ENCODE measurements at regions of chr20 and their contacts with region 1.

Region 1: GRCh38 chr20:56574531-56575142 is 41.6 kb downstream of the FAM209B start:
- DNase-seq: no peak
- H3K4me3 ChIP-seq: no peak overlapping the region
- H3K4me3 Mint-ChIP-seq: no peak overlapping the region
- H3K27ac Mint-ChIP-seq: peak overlapping the region; percentile 4
- H3K4me1 ChIP-seq: peaks cover 12% of the 10 kb centered on the region
- H3K4me1 Mint-ChIP-seq: peaks cover 19% of the 10 kb centered on the region
- H3K27me3 ChIP-seq: no peaks in the 10 kb centered on the region
- H3K27me3 Mint-ChIP-seq: no peaks in the 10 kb centered on the region
- CTCF ChIP-seq: no peak

Region 2: GRCh38 chr20:56247948-56248782 is 326.5 kb before region 1 on chr20 and contains the start of gene MC3R:
- CTCF ChIA-PET with region 1: no interaction called
- POLR2A ChIA-PET with region 1: no interaction called
- intact Hi-C with region 1: loop called (anchors 1 kb)
- DNase-seq: peak; percentile 86
- H3K4me3 ChIP-seq: no peak within 1 kb of the TSS
- H3K4me3 Mint-ChIP-seq: no peak within 1 kb of the TSS
- H3K27ac Mint-ChIP-seq: no peak within 1 kb of the TSS
- H3K4me1 ChIP-seq: no peaks in the 10 kb centered on the region
- H3K4me1 Mint-ChIP-seq: no peaks in the 10 kb centered on the region
- H3K27me3 ChIP-seq: no peaks in the 10 kb centered on the region
- H3K27me3 Mint-ChIP-seq: peaks cover 33% of the 10 kb centered on the region
- CTCF ChIP-seq: peak; percentile 92 to 99
- total RNA-seq, gene MC3R: not detected in 2 replicates

Region 3: GRCh38 chr20:56400090-56400542 is 174.5 kb before region 1 on chr20:
- CTCF ChIA-PET with region 1: no interaction called
- POLR2A ChIA-PET with region 1: no interaction called
- intact Hi-C with region 1: loop called (anchors 1 kb)
- DNase-seq: peak; percentile 66 to 81
- H3K4me3 ChIP-seq: no peak overlapping the region
- H3K4me3 Mint-ChIP-seq: no peak overlapping the region
- H3K27ac Mint-ChIP-seq: no peak overlapping the region
- H3K4me1 ChIP-seq: peaks cover 6% of the 10 kb centered on the region
- H3K4me1 Mint-ChIP-seq: peaks cover 5% of the 10 kb centered on the region
- H3K27me3 ChIP-seq: no peaks in the 10 kb centered on the region
- H3K27me3 Mint-ChIP-seq: no peaks in the 10 kb centered on the region
- CTCF ChIP-seq: peak; percentile 96

Region 4: DNA sequence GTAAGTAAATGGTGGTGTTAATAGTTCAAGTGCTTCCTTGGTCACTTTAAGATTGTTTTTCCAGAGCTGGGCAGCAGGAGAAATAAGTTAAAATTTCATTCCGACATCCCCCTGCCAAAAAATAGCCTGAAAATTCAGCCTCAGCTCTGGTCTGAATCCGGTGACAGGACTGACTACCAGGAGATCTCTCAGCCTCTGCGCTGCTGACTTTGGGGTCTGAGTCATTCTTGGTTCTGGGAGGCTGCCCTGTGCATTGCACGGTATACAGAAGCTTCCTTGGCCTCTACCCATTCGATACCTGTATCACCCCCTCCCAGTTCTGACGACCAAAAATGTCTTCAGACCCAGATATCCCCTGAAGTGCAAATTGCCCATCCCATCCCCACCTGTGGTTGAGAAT is 18.2 kb after region 1 on chr20:
- CTCF ChIA-PET with region 1: interaction called, 6 read pairs
- POLR2A ChIA-PET with region 1: interaction called, 4 read pairs
- intact Hi-C with region 1: loop called (anchors 2 kb)
- DNase-seq: no peak
- H3K4me3 ChIP-seq: no peak overlapping the region
- H3K4me3 Mint-ChIP-seq: no peak overlapping the region
- H3K27ac Mint-ChIP-seq: peak overlapping the region; percentile 89
- H3K4me1 ChIP-seq: peaks cover 50% of the 10 kb centered on the region
- H3K4me1 Mint-ChIP-seq: peaks cover 51% of the 10 kb centered on the region
- H3K27me3 ChIP-seq: no peaks in the 10 kb centered on the region
- H3K27me3 Mint-ChIP-seq: no peaks in the 10 kb centered on the region
- CTCF ChIP-seq: no peak

Region 5: GRCh38 chr20:56606174-56606884 is 31.7 kb after region 1 on chr20:
- CTCF ChIA-PET with region 1: interaction called, 12 read pairs
- POLR2A ChIA-PET with region 1: interaction called, 5 read pairs
- intact Hi-C with region 1: loop called (anchors 1 kb)
- DNase-seq: peak; percentile 94 to 97
- H3K4me3 ChIP-seq: no peak overlapping the region
- H3K4me3 Mint-ChIP-seq: peak overlapping the region; percentile 45
- H3K27ac Mint-ChIP-seq: peak overlapping the region; percentile 94
- H3K4me1 ChIP-seq: peaks cover 63% of the 10 kb centered on the region
- H3K4me1 Mint-ChIP-seq: peaks cover 72% of the 10 kb centered on the region
- H3K27me3 ChIP-seq: no peaks in the 10 kb centered on the region
- H3K27me3 Mint-ChIP-seq: no peaks in the 10 kb centered on the region
- CTCF ChIP-seq: peak in 1 of 2 experiments; percentile 3

Region 6: DNA sequence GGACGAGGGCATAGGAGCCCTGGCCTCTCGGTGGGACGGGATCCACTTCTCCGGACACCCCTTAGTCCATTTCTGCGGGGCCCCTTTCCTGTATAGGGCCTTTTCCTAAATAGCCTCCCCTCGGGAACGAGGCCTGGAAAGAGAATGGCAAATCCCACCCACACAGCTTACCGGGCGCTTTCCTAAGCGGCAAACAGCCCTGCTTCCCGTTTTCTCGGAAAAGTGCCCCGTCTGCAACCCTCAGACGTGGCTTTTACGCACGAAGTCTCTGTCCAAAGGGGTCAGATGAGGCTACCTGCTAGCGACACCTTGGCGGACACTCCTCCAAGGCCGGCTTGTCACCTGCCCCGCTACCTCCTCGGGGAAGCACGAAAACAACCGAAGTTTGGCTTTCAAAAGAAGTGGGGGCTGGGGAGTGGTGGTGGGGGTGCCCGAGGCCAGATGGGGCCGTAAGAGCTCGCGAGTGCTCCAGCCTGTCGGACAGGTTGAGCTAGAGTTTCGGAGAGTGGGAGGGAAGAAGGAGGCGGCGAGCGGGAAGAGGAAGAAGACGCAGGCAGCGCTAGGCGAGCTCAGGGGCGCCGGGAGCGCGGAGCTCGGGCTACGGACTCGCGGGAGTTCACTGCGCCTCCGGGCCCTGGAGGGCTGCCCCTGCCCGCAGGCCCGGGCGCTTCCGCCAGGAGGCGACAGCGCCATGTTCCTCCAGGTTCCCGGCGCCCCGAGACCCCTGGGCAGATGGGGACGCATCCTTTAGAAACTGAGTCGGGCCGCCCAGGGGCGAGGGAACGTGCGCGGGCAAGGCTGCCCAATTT is 55.2 kb after region 1 on chr20:
- CTCF ChIA-PET with region 1: interaction called, 23 read pairs
- POLR2A ChIA-PET with region 1: interaction called, 26 read pairs
- intact Hi-C with region 1: loop called (anchors 1 kb)
- DNase-seq: peak; percentile 94 to 95
- H3K4me3 ChIP-seq: peak overlapping the region; percentile 75
- H3K4me3 Mint-ChIP-seq: peak overlapping the region; percentile 79
- H3K27ac Mint-ChIP-seq: peak overlapping the region; percentile 64
- H3K4me1 ChIP-seq: peaks cover 6% of the 10 kb centered on the region; the same call in 1 of the 2 replicates
- H3K4me1 Mint-ChIP-seq: peaks cover 6% of the 10 kb centered on the region
- H3K27me3 ChIP-seq: no peaks in the 10 kb centered on the region
- H3K27me3 Mint-ChIP-seq: no peaks in the 10 kb centered on the region
- CTCF ChIP-seq: peak; percentile 95 to 96

Region 7: DNA sequence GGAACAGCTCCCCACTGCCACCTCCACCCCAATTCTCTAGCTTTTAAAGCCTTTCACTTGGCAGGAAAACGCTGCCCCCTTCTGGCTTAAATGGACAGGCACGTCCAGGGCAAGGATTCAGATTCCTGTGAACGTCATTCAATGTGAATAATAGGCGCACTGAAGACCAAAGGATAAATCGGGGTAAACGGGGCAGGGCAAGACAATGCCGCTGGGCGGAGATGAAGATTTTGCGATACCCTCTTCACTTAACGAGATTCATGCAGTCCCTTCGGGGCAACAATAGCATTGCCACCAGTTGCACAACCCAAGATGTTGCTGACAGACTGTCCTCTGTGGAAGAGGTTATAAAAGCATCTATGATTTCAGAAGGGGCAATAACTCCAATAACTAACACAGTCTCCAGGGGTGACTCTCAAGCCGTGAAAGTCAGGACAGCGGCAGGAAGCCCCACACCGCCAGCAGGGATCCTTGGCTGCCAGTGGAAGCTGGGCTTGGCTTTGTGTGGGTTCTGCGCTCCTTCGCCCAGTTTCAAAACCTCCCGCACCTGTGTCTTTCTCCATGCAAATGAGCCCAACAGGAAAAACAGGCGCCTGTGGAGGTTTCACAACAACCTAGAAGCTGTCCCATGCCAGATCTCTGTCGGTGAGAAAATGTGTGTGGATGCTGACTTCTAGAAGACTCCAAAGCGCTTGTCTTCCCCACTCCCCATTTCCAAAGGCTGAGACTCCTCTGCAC is 400.0 kb after region 1 on chr20:
- CTCF ChIA-PET with region 1: interaction called, 8 read pairs
- POLR2A ChIA-PET with region 1: no interaction called
- intact Hi-C with region 1: loop called (anchors 1 kb)
- DNase-seq: peak; percentile 76 to 81
- H3K4me3 ChIP-seq: no peak overlapping the region
- H3K4me3 Mint-ChIP-seq: no peak overlapping the region
- H3K27ac Mint-ChIP-seq: no peak overlapping the region
- H3K4me1 ChIP-seq: no peaks in the 10 kb centered on the region
- H3K4me1 Mint-ChIP-seq: no peaks in the 10 kb centered on the region
- H3K27me3 ChIP-seq: peaks cover 1% of the 10 kb centered on the region; the same call in 1 of the 2 replicates
- H3K27me3 Mint-ChIP-seq: peaks cover 21% of the 10 kb centered on the region
- CTCF ChIP-seq: peak; percentile 95 to 96

Measured in Caco-2 (cell line).